K562 (cell line): ENCODE measurements at regions of chr6 and their contacts with region 1.

Region 1: DNA sequence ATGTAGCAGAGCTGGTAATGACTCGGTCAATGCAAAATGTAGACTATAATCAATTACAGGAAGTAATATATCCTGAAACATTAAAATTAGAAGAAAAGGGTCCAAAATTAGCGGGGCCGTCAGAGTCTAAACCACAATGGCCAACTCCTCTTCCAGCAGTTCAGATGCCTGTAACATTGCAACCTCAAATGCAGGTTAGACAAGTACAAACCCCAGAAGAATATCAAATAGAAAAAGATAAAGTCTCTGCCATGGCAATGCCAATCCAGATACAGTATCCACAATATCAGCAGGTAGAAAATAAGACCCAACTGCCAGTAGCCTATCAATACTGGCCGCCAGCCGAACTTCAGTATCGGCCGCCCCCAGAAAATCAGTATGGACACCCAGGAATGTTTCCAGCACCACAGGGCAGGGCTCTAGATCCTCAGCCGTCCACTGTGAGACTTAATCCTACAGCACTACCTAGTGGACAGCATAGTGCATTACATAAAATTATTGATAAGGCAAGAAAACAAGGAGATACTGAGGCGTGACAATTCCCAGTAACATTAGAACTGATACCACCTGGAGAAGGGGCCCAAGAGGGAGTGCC is 158.4 kb downstream of the GPX5 start:
- DNase-seq: peak; percentile 62 to 81 (median 66)
- ATAC-seq: peak; percentile 86
- H3K4me3 ChIP-seq: no peak overlapping the region
- H3K27ac ChIP-seq: no peak overlapping the region
- H3K4me1 ChIP-seq: peaks cover 0 to 44% of the 10 kb centered on the region in 2 experiments
- H3K27me3 ChIP-seq: no peaks in the 10 kb centered on the region
- CTCF ChIP-seq: peak; percentile 73 to 86 (median 81)
- EP300 ChIP-seq: no peak
- POLR2A ChIP-seq: no peak
- RAD21 ChIP-seq: peak; percentile 96 to 97

Region 2: GRCh38 chr6:28136585-28137504 is 547.2 kb before region 1 on chr6:
- CTCF ChIA-PET with region 1: no interaction called
- POLR2A ChIA-PET with region 1: no interaction called
- in situ Hi-C with region 1: no loop called
- intact Hi-C with region 1: loop called (anchors 2 kb)
- DNase-seq: peak; percentile 84 to 99 (median 88)
- ATAC-seq: peak; percentile 80
- H3K4me3 ChIP-seq: peak overlapping the region; percentile 72
- H3K27ac ChIP-seq: peak overlapping the region; percentile 96
- H3K4me1 ChIP-seq: peaks cover 12 to 20% of the 10 kb centered on the region in 2 experiments; a peak in 4 of 5 replicates
- H3K27me3 ChIP-seq: no peaks in the 10 kb centered on the region
- CTCF ChIP-seq: no peak
- EP300 ChIP-seq: peak; percentile 91
- POLR2A ChIP-seq: peak; percentile 93
- RAD21 ChIP-seq: peak; percentile 38 to 48; a peak in 3 of 4 replicates

Region 3: GRCh38 chr6:28489366-28490204 is 194.5 kb before region 1 on chr6:
- CTCF ChIA-PET with region 1: no interaction called
- POLR2A ChIA-PET with region 1: no interaction called
- in situ Hi-C with region 1: loop called (anchors 5 kb)
- intact Hi-C with region 1: no loop called
- DNase-seq: peak; percentile 90 to 98 (median 93)
- ATAC-seq: peak; percentile 91
- H3K4me3 ChIP-seq: peak overlapping the region; percentile 57
- H3K27ac ChIP-seq: peak overlapping the region; percentile 88
- H3K4me1 ChIP-seq: peaks cover 9 to 26% of the 10 kb centered on the region in 2 experiments
- H3K27me3 ChIP-seq: no peaks in the 10 kb centered on the region
- CTCF ChIP-seq: no peak
- EP300 ChIP-seq: peak; percentile 62
- POLR2A ChIP-seq: peak; percentile 77
- RAD21 ChIP-seq: no peak

Region 4: DNA sequence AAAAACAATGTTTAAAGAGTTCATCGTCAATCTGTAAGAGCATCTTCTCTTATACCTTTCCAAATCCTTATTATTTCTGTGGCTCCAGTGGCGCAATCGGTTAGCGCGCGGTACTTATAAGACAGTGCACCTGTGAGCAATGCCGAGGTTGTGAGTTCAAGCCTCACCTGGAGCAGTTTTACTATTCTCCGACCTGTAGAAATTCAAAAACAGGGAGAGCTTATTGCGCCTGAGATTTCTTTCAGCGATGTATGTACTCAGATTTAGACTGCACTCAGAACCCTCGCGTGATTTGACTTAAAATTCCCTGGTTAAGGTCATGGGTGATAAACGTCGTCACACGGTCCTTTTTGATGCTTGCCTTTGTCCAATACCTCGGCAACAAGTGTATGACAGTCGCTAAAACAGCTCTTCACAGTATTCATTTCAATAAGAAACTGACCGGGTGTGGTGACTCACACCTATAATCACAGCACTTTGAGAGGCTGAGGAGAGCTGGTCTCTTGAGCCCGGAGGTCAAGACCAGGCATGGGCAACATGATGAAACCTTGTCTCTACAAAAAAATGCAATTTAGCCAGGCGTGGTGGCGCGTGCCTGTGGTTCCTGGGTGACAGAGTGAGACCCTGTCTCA is 146.4 kb before region 1 on chr6:
- CTCF ChIA-PET with region 1: no interaction called
- POLR2A ChIA-PET with region 1: interaction called, 3 read pairs
- in situ Hi-C with region 1: loop called (anchors 5 kb)
- intact Hi-C with region 1: no loop called
- DNase-seq: peak in 1 of 4 experiments; percentile 43
- ATAC-seq: no peak
- H3K4me3 ChIP-seq: no peak overlapping the region
- H3K27ac ChIP-seq: no peak overlapping the region
- H3K4me1 ChIP-seq: peaks cover 7 to 11% of the 10 kb centered on the region in 2 experiments
- H3K27me3 ChIP-seq: no peaks in the 10 kb centered on the region
- CTCF ChIP-seq: no peak
- EP300 ChIP-seq: no peak
- POLR2A ChIP-seq: no peak
- RAD21 ChIP-seq: no peak

Region 5: DNA sequence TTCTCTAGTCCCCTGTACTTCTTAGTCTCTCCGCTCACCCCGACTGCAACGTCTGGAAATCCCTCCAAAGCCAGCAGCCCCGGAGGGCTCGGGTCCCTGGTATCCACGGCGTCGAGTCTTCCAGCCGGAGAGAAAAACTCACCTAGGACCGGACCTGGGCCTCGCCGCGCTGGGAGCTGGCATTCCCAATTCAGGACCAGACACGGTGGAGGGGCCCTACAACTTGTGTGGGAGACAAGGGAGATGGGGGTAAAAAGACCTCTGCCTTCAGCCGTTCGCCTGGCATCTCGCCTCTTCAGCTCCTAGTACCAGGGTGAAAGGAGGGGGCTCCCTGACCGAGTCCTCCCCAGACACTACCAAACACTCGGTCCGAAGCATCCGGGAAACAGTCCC is 94.1 kb before region 1 on chr6:
- CTCF ChIA-PET with region 1: no interaction called
- POLR2A ChIA-PET with region 1: no interaction called
- in situ Hi-C with region 1: no loop called
- intact Hi-C with region 1: no loop called
- DNase-seq: no peak
- ATAC-seq: no peak
- H3K4me3 ChIP-seq: no peak overlapping the region
- H3K27ac ChIP-seq: no peak overlapping the region
- H3K4me1 ChIP-seq: no peaks in the 10 kb centered on the region; a peak in 1 of 5 replicates
- H3K27me3 ChIP-seq: no peaks in the 10 kb centered on the region
- CTCF ChIP-seq: no peak
- EP300 ChIP-seq: no peak
- POLR2A ChIP-seq: no peak
- RAD21 ChIP-seq: no peak

Region 6: GRCh38 chr6:28725890-28726348 is 41.9 kb after region 1 on chr6:
- CTCF ChIA-PET with region 1: no interaction called
- POLR2A ChIA-PET with region 1: no interaction called
- in situ Hi-C with region 1: no loop called
- intact Hi-C with region 1: loop called (anchors 2 kb)
- DNase-seq: peak; percentile 51 to 93 (median 70)
- ATAC-seq: peak; percentile 50
- H3K4me3 ChIP-seq: peak overlapping the region; percentile 63
- H3K27ac ChIP-seq: peak overlapping the region; percentile 80; the same call in 2 of the 3 replicates
- H3K4me1 ChIP-seq: peaks cover 7 to 10% of the 10 kb centered on the region in 2 experiments; a peak in 4 of 5 replicates
- H3K27me3 ChIP-seq: no peaks in the 10 kb centered on the region
- CTCF ChIP-seq: no peak
- EP300 ChIP-seq: peak; percentile 65
- POLR2A ChIP-seq: no peak
- RAD21 ChIP-seq: 0 out of 4 replicates have a peak, but pooled peaks of 1 of the 2 experiments have one; percentile 9

Region 7: GRCh38 chr6:28807682-28808280 is 123.7 kb after region 1 on chr6:
- CTCF ChIA-PET with region 1: interaction called, 6 read pairs
- POLR2A ChIA-PET with region 1: no interaction called
- in situ Hi-C with region 1: no loop called
- intact Hi-C with region 1: loop called (anchors 2 kb)
- DNase-seq: peak; percentile 63 to 95 (median 70)
- ATAC-seq: peak; percentile 49
- H3K4me3 ChIP-seq: peak overlapping the region; percentile 52
- H3K27ac ChIP-seq: peak overlapping the region; percentile 25
- H3K4me1 ChIP-seq: peaks cover 11 to 12% of the 10 kb centered on the region in 2 experiments; a peak in 4 of 5 replicates
- H3K27me3 ChIP-seq: no peaks in the 10 kb centered on the region
- CTCF ChIP-seq: no peak
- EP300 ChIP-seq: peak; percentile 79
- POLR2A ChIP-seq: no peak
- RAD21 ChIP-seq: no peak; a peak in 1 of 4 replicates

Region 8: GRCh38 chr6:28940858-28941680 is 257.0 kb after region 1 on chr6:
- CTCF ChIA-PET with region 1: no interaction called
- POLR2A ChIA-PET with region 1: no interaction called
- in situ Hi-C with region 1: no loop called
- intact Hi-C with region 1: loop called (anchors 2 kb)
- DNase-seq: peak; percentile 62 to 94 (median 68)
- ATAC-seq: peak; percentile 82
- H3K4me3 ChIP-seq: peak overlapping the region; percentile 64
- H3K27ac ChIP-seq: peak overlapping the region; percentile 91
- H3K4me1 ChIP-seq: peaks cover 3 to 20% of the 10 kb centered on the region in 2 experiments; a peak in 3 of 5 replicates
- H3K27me3 ChIP-seq: no peaks in the 10 kb centered on the region
- CTCF ChIP-seq: no peak; a peak in 2 of 6 replicates
- EP300 ChIP-seq: peak; percentile 88
- POLR2A ChIP-seq: no peak
- RAD21 ChIP-seq: peak in 1 of 2 experiments; percentile 52; a peak in 2 of 4 replicates